CD8-positive, alpha-beta T cell (primary cell): ENCODE measurements at regions of chr12 and their contacts with region 1.

Region 1: GRCh38 chr12:48795480-48796455 is 6.9 kb upstream of the ADCY6 start:
- DNase-seq: peak in 8 of 9 experiments; percentile 34 to 74 (median 60)
- ATAC-seq: peak; percentile 90
- H3K4me3 ChIP-seq: no peak overlapping the region
- H3K4me3 Mint-ChIP-seq: no peak overlapping the region
- H3K27ac ChIP-seq: no peak overlapping the region
- H3K27ac Mint-ChIP-seq: no peak overlapping the region
- H3K4me1 ChIP-seq: no peaks in the 10 kb centered on the region
- H3K4me1 Mint-ChIP-seq: peaks cover 3% of the 10 kb centered on the region
- H3K27me3 ChIP-seq: peaks cover 0 to 4% of the 10 kb centered on the region in 2 experiments
- H3K27me3 Mint-ChIP-seq: peaks cover 15% of the 10 kb centered on the region
- CTCF ChIP-seq: peak; percentile 92

Region 2: DNA sequence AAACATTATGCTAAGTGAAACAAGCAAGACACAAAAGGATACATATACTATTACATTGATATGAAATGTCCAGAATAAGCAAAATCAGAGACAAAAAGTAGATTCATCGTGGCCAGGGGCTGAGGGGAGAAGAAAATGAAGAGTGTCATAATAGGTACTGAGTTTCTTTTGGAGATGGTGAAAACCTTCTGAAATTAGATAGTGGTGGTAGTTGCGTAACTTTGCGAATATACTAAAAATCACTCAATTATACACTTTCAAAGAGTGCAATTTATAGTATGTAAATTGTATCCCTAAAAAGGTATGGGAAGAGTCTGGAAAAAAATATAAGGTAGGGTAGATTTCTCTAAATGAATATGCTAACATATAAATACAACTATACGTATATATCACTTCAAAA is 135.9 kb before region 1 on chr12:
- CTCF ChIA-PET with region 1: no interaction called
- POLR2A ChIA-PET with region 1: no interaction called
- intact Hi-C with region 1: loop called in 1 of 2 experiments (anchors 5 kb)
- DNase-seq: no peak
- ATAC-seq: no peak
- H3K4me3 ChIP-seq: no peak overlapping the region
- H3K4me3 Mint-ChIP-seq: no peak overlapping the region
- H3K27ac ChIP-seq: no peak overlapping the region
- H3K27ac Mint-ChIP-seq: no peak overlapping the region
- H3K4me1 ChIP-seq: no peaks in the 10 kb centered on the region
- H3K4me1 Mint-ChIP-seq: peaks cover 4% of the 10 kb centered on the region
- H3K27me3 ChIP-seq: no peaks in the 10 kb centered on the region
- H3K27me3 Mint-ChIP-seq: no peaks in the 10 kb centered on the region
- CTCF ChIP-seq: no peak

Region 3: DNA sequence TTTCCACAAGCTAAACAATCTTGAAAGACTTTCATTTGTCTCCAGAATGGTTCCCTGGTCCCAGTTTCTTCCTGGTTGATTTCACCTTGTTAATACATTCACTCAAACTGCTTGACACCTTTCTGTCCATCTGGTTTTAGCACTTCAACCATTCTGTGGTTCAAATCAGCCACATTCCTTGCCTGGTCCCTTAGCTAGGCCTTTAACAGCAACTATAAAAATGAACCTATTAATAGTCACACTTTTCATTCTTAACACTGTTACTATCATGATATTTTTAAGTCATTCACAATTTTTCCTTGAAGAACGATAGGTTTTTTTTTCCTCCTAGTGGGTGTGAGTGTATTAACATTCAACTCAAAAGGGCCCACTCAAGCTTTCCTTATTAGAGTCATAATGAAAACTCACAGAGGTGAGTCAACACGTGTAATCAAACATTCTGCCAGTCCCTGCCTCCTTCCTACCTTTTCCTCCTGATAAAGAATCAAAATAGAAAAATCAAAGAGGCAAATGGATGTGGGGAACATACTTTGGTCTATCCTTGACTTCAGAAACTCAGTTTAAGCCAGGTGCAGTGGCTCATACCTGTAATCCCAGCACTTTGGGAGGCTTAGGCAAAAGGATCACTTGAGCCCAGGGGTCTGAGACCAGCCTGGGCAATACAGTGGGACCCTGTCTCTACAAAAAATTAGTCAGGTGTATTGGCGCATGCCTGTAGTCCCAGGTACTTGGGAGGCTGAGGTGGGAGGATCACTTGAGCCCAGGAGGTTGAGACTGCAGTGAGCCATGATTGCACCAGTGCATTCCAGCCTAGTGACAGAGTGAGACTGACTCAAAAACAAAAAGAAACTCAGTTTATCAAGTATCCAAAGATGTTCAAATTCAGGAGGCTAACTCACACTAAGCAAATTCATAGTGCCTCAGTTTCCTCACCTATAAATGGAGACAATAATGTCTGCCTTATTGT is 44.7 kb before region 1 on chr12:
- CTCF ChIA-PET with region 1: interaction called, 149 read pairs
- POLR2A ChIA-PET with region 1: interaction called, 3 read pairs
- intact Hi-C with region 1: loop called (anchors 1 kb)
- DNase-seq: no peak
- ATAC-seq: no peak
- H3K4me3 ChIP-seq: no peak overlapping the region
- H3K4me3 Mint-ChIP-seq: no peak overlapping the region
- H3K27ac ChIP-seq: no peak overlapping the region
- H3K27ac Mint-ChIP-seq: no peak overlapping the region
- H3K4me1 ChIP-seq: no peaks in the 10 kb centered on the region
- H3K4me1 Mint-ChIP-seq: no peaks in the 10 kb centered on the region
- H3K27me3 ChIP-seq: no peaks in the 10 kb centered on the region
- H3K27me3 Mint-ChIP-seq: no peaks in the 10 kb centered on the region
- CTCF ChIP-seq: no peak

Region 4: GRCh38 chr12:48779869-48780268 is 15.9 kb before region 1 on chr12:
- CTCF ChIA-PET with region 1: interaction called, 24 read pairs
- POLR2A ChIA-PET with region 1: no interaction called
- intact Hi-C with region 1: no loop called
- DNase-seq: no peak
- ATAC-seq: no peak
- H3K4me3 ChIP-seq: no peak overlapping the region
- H3K4me3 Mint-ChIP-seq: no peak overlapping the region
- H3K27ac ChIP-seq: no peak overlapping the region
- H3K27ac Mint-ChIP-seq: no peak overlapping the region
- H3K4me1 ChIP-seq: no peaks in the 10 kb centered on the region
- H3K4me1 Mint-ChIP-seq: no peaks in the 10 kb centered on the region
- H3K27me3 ChIP-seq: no peaks in the 10 kb centered on the region
- H3K27me3 Mint-ChIP-seq: peaks cover 5% of the 10 kb centered on the region
- CTCF ChIP-seq: no peak